ENCODE measurements at regions of chr12 and their contacts with region 1.

Region 1: GRCh38 chr12:117367011-117367638 is 5.7 kb upstream of the NOS1 start:
- DNase-seq: peak; percentile 77 to 84 (median 79)
- ATAC-seq: peak; percentile 92
- H3K4me3 ChIP-seq: no peak overlapping the region
- H3K27ac ChIP-seq: no peak overlapping the region
- H3K4me1 ChIP-seq: no peaks in the 10 kb centered on the region
- H3K27me3 ChIP-seq: peaks cover 0 to 13% of the 10 kb centered on the region in 2 experiments; a peak in 2 of 5 replicates
- CTCF ChIP-seq: peak; percentile 84 to 91 (median 86)
- EP300 ChIP-seq: no peak
- POLR2A ChIP-seq: no peak
- RAD21 ChIP-seq: peak; percentile 70 to 85

Region 2: DNA sequence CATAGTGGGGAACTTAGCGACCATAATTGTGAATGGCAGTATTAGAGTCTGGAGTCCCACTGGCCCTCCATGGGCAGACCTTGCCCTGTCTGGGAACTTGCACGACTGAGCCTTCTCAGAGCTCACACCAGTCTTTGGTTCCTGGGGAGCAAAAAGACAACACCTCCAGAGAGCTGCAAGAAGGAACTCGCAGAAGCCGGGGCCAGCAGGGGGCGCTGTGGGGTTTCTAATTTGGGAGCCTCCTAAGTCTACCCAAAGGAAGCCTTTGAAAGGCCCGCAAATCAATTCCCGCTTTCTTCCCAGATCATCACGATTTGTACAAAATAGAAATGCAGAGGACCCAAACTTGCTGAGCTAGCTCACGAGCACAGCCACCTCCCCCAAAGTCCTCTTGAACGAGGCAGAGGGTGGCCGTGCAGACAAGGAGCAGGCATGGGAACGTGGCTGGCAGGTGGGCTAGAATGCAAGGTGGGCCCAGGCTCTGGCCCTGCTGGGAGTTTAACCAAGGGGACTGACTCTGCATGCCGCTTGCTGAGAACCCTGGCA is 130.6 kb before region 1 on chr12:
- CTCF ChIA-PET with region 1: interaction called, 5 read pairs
- POLR2A ChIA-PET with region 1: no interaction called
- in situ Hi-C with region 1: no loop called
- intact Hi-C with region 1: loop called (anchors 10 kb)
- DNase-seq: peak; percentile 65 to 82 (median 75)
- ATAC-seq: peak; percentile 95
- H3K4me3 ChIP-seq: no peak overlapping the region
- H3K27ac ChIP-seq: no peak overlapping the region
- H3K4me1 ChIP-seq: 0 out of 5 replicates have a peak, but pooled peaks cover 0 to 3% of the 10 kb centered on the region in 2 experiments
- H3K27me3 ChIP-seq: peaks cover 10 to 27% of the 10 kb centered on the region in 2 experiments; a peak in 3 of 5 replicates
- CTCF ChIP-seq: peak; percentile 72 to 85 (median 85)
- EP300 ChIP-seq: no peak
- POLR2A ChIP-seq: no peak
- RAD21 ChIP-seq: peak; percentile 30 to 65; a peak in 3 of 4 replicates

Region 3: DNA sequence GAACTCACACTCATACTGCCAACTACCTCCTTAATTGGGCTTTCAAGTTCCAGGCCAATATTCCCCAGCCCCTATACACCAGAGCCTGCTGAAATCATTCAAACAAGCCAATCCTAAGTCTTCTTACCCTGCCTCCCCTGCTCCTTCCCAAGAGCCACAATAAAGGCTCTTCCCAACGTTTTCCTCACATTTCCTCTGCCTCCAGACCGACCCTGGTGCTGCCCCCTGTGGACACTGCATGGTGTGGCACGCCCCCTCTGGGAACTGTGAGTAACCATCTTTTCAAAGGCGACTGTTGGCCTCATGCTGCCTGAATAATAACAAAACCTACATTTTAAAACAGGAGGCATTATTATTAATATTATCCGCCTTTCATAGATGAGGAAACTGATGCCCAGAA is 105.9 kb after region 1 on chr12:
- CTCF ChIA-PET with region 1: no interaction called
- POLR2A ChIA-PET with region 1: no interaction called
- in situ Hi-C with region 1: no loop called
- intact Hi-C with region 1: loop called (anchors 5 kb)
- DNase-seq: peak; percentile 21 to 49 (median 36)
- ATAC-seq: peak; percentile 78
- H3K4me3 ChIP-seq: no peak overlapping the region
- H3K27ac ChIP-seq: no peak overlapping the region
- H3K4me1 ChIP-seq: no peaks in the 10 kb centered on the region
- H3K27me3 ChIP-seq: no peaks in the 10 kb centered on the region
- CTCF ChIP-seq: peak; percentile 56 to 89 (median 63)
- EP300 ChIP-seq: no peak
- POLR2A ChIP-seq: no peak
- RAD21 ChIP-seq: no peak

Region 4: DNA sequence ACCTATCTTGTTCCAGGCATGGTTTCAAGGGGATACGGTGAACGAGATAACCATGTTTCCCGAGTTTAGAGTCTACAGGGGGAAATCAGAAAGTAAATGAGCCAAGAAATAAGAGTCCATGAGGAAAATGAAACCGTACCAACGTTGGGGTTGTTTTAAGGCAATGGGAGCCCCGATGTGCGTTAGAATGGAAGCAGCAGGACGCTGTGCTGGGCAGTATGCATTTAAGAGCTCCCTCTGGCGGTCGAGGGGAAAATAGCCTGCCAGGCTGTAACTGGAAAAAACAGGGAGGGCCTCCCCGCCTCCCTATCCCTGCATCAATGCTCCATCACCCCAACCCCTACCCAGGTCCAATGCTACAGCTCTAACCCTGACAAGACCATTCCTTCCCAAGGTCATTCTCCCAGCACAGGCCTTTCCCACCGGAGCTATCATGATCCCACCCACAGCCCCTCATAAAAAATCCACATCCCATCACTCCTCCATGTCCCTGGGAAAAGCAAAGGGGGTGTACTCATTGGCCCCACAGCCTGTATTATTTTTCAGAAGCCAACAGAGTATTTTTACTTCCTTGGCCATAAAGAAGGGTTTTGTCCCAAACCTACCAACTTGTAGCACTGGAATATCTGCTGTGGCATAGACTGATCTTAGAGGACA is 220.6 kb after region 1 on chr12:
- CTCF ChIA-PET with region 1: interaction called, 11 read pairs
- POLR2A ChIA-PET with region 1: no interaction called
- in situ Hi-C with region 1: loop called (anchors 10 kb)
- intact Hi-C with region 1: loop called (anchors 1 kb)
- DNase-seq: peak; percentile 60 to 80 (median 70)
- ATAC-seq: peak; percentile 92
- H3K4me3 ChIP-seq: no peak overlapping the region
- H3K27ac ChIP-seq: no peak overlapping the region
- H3K4me1 ChIP-seq: no peaks in the 10 kb centered on the region
- H3K27me3 ChIP-seq: no peaks in the 10 kb centered on the region; a peak in 1 of 5 replicates
- CTCF ChIP-seq: peak; percentile 82 to 87 (median 82)
- EP300 ChIP-seq: no peak
- POLR2A ChIP-seq: no peak
- RAD21 ChIP-seq: peak; percentile 24 to 74

Region 5: DNA sequence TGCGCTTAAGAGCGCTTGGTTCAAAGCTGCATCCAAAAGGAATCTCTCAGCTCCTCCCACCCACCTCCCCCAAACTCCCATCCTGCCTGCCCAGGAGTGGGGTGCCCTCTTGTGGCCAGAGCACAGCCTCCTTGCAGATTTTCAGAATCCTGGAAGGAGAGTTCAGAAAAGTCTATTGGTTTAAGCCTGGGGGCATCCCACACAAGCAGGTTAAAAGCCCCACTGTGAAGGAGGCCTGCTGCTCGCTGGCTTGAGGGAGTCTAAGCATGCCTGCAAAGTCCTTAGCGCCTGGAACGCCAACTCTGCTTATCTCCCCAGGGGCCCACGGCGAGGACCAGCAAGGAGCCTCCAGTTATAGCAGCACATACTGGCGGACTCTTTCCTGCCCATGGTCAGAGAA is 304.6 kb after region 1 on chr12:
- CTCF ChIA-PET with region 1: interaction called, 3 read pairs
- POLR2A ChIA-PET with region 1: no interaction called
- in situ Hi-C with region 1: no loop called
- intact Hi-C with region 1: loop called (anchors 2 kb)
- DNase-seq: peak; percentile 55 to 79 (median 72)
- ATAC-seq: peak; percentile 75
- H3K4me3 ChIP-seq: no peak overlapping the region
- H3K27ac ChIP-seq: no peak overlapping the region
- H3K4me1 ChIP-seq: no peaks in the 10 kb centered on the region
- H3K27me3 ChIP-seq: peaks cover 0 to 5% of the 10 kb centered on the region in 2 experiments; a peak in 1 of 5 replicates
- CTCF ChIP-seq: peak; percentile 70 to 79 (median 75)
- EP300 ChIP-seq: no peak
- POLR2A ChIP-seq: no peak
- RAD21 ChIP-seq: peak in 1 of 2 experiments; percentile 41; a peak in 2 of 4 replicates

Region 6: DNA sequence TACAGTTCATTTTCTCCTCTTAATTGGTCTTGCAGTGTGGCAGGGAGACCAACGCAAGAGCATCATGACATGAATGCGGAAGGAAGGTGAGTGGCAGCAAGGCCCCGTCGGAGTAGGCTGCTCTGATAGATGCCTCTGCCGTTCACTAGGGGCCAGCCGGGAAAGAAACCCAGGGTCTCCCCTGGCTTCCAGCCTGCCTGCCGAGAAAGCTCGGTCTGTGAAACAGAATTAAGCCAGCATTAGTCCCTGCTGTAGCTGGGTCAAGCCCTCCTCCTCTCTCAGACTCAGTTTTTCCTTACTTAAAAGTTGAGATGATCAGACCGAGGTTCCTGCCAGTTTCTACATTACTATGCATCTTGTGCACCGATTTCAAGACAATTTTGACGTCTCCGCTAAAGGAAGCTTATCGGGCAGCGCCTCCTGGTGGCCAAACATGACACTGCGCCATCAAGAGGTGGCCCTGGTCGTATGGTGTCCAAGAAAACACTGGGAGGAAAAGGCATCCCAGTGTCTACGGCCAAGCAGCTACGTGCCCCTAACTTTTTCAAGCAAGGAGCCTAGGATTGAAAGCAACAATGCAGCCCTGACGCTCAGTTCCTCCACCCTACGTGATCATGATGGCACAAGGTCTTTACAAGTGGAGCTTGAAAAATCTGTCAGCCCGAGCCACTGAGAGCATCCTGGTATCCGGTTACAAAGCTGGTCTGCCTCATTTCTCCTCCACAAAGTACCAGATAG is 470.0 kb after region 1 on chr12:
- CTCF ChIA-PET with region 1: interaction called, 35 read pairs
- POLR2A ChIA-PET with region 1: no interaction called
- in situ Hi-C with region 1: loop called (anchors 5 kb)
- intact Hi-C with region 1: loop called (anchors 1 kb)
- DNase-seq: peak; percentile 65 to 78 (median 77)
- ATAC-seq: peak; percentile 91
- H3K4me3 ChIP-seq: no peak overlapping the region
- H3K27ac ChIP-seq: no peak overlapping the region
- H3K4me1 ChIP-seq: no peaks in the 10 kb centered on the region
- H3K27me3 ChIP-seq: peaks cover 0 to 21% of the 10 kb centered on the region in 2 experiments; a peak in 2 of 5 replicates
- CTCF ChIP-seq: peak; percentile 89 to 98 (median 95)
- EP300 ChIP-seq: no peak
- POLR2A ChIP-seq: no peak
- RAD21 ChIP-seq: peak; percentile 76 to 93

Measured in K562 (cell line).